AG04449 (cell line): ENCODE measurements at regions of chr2 and their contacts with region 1.

Region 1: DNA sequence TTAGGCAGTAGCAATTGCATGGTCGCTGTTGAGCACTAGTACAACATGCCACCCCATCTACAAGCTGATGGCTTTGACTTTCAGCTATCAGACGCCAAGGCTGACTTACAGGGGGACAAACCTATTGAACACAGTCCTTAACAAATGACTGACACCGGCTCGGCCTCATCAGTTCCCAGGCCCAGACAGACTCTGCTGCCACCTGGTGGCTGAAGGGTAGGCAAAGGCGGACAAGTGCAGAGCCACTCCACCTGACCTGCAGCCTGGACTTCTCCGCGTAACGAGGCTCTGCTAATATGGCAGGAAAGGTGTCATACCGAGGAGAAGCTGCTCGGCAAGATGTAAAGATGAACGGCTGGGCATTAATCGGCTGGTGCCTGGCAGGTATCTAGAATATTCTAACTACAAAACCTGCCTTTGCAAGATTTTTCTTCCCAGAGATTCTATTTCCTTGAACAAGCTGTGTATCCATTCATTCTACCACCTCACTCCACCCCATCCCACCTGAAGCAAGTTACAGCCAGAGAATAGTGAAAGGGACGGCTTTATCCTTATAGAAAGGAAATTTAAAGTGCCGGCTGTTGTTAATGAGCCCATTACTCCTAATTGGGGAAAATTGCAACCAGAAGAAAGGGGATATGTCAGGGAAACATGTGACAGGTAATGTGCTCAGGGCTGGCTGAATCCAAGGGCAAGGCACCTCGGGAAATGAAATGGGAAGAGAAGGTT is 67.4 kb downstream of the STEAP3 start:
- DNase-seq: peak; percentile 4
- H3K4me3 ChIP-seq: no peak overlapping the region
- CTCF ChIP-seq: peak; percentile 88

Region 2: GRCh38 chr2:118882709-118883210 is 408.3 kb before region 1 on chr2:
- CTCF ChIA-PET with region 1: interaction called, 77 read pairs
- POLR2A ChIA-PET with region 1: no interaction called
- DNase-seq: peak; percentile 5
- H3K4me3 ChIP-seq: peak overlapping the region; percentile 51
- CTCF ChIP-seq: peak; percentile 98

Region 3: DNA sequence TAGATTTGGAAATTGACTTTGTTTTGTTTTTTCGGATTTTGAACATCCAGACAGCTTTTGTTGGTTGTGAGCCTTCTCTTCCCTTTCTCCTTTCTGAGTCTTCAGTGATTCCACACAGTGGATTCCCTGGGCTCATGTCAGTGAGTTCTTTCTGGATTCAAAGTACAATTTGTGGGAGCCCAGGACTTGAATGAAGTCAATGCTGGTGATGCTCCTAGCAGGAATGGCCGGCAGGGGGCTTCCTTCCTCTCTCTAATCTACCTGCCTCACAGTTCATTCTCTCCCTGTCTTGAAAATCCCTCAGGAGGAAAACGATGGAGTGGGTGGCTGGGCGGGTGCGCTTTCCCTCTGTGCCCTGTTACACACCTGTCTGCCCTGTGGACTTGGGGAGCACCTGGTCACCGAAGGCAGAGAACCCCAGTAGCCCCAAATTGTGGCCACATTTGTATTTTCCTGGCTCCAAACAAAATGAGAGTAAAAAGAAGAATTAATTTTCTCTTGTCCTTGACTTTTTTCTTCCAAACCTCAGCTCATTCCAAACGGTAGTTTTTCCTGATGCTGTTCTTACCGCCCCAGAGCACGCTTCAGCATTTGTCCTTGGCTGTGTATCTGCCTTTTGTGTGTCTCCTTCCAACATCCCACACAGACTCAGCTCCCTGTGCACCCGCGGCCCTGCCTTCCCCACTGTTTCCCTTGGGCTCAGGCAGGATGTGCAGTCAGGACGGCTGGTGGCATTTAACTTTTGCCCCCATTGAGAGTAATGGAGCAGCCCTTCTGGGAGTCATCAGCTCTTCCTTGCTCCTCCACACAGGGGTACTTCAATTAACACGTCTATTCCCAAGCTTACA is 262.5 kb before region 1 on chr2:
- CTCF ChIA-PET with region 1: interaction called, 50 read pairs
- POLR2A ChIA-PET with region 1: no interaction called
- DNase-seq: no peak
- H3K4me3 ChIP-seq: no peak overlapping the region
- CTCF ChIP-seq: peak; percentile 61

Region 4: GRCh38 chr2:119208791-119209203 is 82.2 kb before region 1 on chr2:
- CTCF ChIA-PET with region 1: interaction called, 13 read pairs
- POLR2A ChIA-PET with region 1: no interaction called
- DNase-seq: no peak
- H3K4me3 ChIP-seq: no peak overlapping the region
- CTCF ChIP-seq: no peak

Region 5: GRCh38 chr2:119234377-119235019 is 56.5 kb before region 1 on chr2:
- CTCF ChIA-PET with region 1: interaction called, 10 read pairs
- POLR2A ChIA-PET with region 1: no interaction called
- DNase-seq: no peak
- H3K4me3 ChIP-seq: no peak overlapping the region
- CTCF ChIP-seq: peak; percentile 44

Region 6: GRCh38 chr2:119301413-119301812 is 10.4 kb after region 1 on chr2:
- CTCF ChIA-PET with region 1: interaction called, 62 read pairs
- POLR2A ChIA-PET with region 1: no interaction called
- DNase-seq: no peak
- H3K4me3 ChIP-seq: no peak overlapping the region
- CTCF ChIP-seq: no peak